Activated naive CD4-positive, alpha-beta T cell treated with anti-CD3 and anti-CD28 coated beads for 36 hours (primary cell): ENCODE measurements at regions of chr17 and their contacts with region 1.

Region 1: GRCh38 chr17:75978938-75979704 is at the starts of genes ACOX1 and TEN1:
- DNase-seq: peak; percentile 98
- H3K4me3 Mint-ChIP-seq: peak within 1 kb of the TSS; percentile 99
- H3K27ac Mint-ChIP-seq: peak within 1 kb of the TSS; percentile 100
- H3K4me1 Mint-ChIP-seq: peaks cover 30% of the 10 kb centered on the region
- H3K27me3 Mint-ChIP-seq: no peaks in the 10 kb centered on the region
- total RNA-seq, gene ACOX1: 31.4 to 34.9 TPM
- total RNA-seq, gene TEN1: 9.7 to 12.2 TPM

Region 2: GRCh38 chr17:75827252-75828115 is 151.6 kb before region 1 on chr17:
- CTCF ChIA-PET with region 1: no interaction called
- intact Hi-C with region 1: loop called (anchors 5 kb)
- DNase-seq: peak; percentile 75
- H3K4me3 Mint-ChIP-seq: peak overlapping the region; percentile 29
- H3K27ac Mint-ChIP-seq: peak overlapping the region; percentile 80
- H3K4me1 Mint-ChIP-seq: peaks cover 18% of the 10 kb centered on the region
- H3K27me3 Mint-ChIP-seq: no peaks in the 10 kb centered on the region

Region 3: DNA sequence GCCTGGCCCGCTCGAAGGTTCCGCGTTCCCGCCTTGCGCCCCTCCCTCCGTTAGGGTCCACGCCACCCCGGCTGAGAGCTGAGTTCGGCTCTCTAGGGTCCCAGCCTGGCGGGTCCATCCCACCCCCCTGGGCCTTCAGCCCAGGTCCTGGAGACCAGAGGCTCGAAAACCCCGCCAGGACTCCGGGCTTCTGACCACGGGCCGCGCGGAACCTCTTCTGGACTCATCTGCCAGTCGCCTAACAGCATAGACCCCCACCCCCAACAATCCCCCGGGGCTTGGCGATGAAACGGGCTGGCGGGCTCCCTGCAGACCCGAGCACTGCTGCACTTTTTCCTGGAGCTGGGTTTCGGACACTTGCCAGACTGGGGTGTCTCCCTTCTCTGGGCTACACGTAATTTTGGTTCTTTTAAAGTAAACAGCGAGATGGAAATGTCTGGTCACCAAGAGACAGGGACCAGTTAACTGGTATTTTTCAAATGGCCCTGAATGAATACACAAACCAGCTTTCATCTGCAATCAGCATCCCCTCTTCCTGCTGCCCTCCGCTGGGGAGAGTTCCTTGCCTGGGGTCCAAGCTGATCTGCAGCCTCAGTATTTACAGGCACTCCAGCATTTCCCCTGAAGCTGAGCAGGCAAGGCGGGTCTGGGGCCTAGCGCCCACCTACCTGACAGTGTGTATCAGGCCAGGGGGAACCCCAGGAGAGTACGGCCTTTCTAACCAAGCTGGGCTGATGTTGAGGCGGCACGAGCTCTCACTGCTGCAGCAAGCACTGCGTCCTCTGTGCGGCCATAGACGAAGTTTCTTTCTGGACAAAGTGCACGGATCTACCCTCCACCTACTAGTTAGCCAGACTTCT is 81.7 kb before region 1 on chr17:
- CTCF ChIA-PET with region 1: no interaction called
- intact Hi-C with region 1: no loop called
- DNase-seq: no peak
- H3K4me3 Mint-ChIP-seq: peak overlapping the region; percentile 63
- H3K27ac Mint-ChIP-seq: peak overlapping the region; percentile 43
- H3K4me1 Mint-ChIP-seq: peaks cover 28% of the 10 kb centered on the region
- H3K27me3 Mint-ChIP-seq: no peaks in the 10 kb centered on the region

Region 4: DNA sequence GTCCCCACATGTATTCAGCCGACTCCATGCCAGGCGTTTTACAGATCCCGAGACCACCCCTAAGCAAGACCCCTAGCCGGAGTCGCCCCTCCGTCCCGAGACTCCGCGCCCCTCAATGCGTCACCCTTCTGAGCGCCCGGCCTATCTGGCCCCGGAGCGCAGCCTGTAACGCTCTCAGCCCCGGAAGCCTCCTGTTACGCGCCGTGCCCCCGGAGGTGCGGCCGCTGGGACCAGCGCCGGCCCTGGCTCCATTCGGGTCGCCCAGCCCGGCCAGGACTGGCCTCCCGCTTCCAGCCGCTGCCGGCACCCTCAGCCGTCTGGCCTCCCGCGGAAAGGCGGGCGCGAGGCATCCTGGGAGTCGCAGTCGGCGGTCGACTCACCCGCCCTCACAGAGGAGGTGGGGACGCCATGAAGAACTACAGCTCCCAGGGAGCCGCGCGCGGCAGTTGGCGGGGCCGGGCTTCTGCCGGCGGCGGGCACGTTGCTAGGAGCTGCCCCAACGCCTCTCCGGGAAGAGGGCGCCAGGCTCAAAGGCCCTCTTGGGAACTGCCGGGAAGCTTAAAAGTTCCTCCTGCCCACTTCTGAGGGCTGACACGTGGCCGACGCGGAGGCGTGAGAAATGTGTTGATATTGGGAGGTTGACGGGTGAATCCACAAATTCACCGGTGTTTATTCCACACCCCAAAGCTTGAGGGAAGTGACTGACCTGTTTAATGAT is 38.2 kb before region 1 on chr17 and contains the start of gene FBF1:
- CTCF ChIA-PET with region 1: no interaction called
- intact Hi-C with region 1: loop called (anchors 1 kb)
- DNase-seq: peak; percentile 92
- H3K4me3 Mint-ChIP-seq: peak within 1 kb of the TSS; percentile 88
- H3K27ac Mint-ChIP-seq: peak within 1 kb of the TSS; percentile 76
- H3K4me1 Mint-ChIP-seq: peaks cover 11% of the 10 kb centered on the region
- H3K27me3 Mint-ChIP-seq: no peaks in the 10 kb centered on the region
- total RNA-seq, gene FBF1: 20.7 to 21.0 TPM

Region 5: GRCh38 chr17:76000016-76000754 is 21.1 kb after region 1 on chr17:
- CTCF ChIA-PET with region 1: interaction called, 6 read pairs
- intact Hi-C with region 1: loop called (anchors 2 kb)
- DNase-seq: peak; percentile 75
- H3K4me3 Mint-ChIP-seq: no peak overlapping the region
- H3K27ac Mint-ChIP-seq: no peak overlapping the region
- H3K4me1 Mint-ChIP-seq: peaks cover 16% of the 10 kb centered on the region
- H3K27me3 Mint-ChIP-seq: no peaks in the 10 kb centered on the region

Region 6: DNA sequence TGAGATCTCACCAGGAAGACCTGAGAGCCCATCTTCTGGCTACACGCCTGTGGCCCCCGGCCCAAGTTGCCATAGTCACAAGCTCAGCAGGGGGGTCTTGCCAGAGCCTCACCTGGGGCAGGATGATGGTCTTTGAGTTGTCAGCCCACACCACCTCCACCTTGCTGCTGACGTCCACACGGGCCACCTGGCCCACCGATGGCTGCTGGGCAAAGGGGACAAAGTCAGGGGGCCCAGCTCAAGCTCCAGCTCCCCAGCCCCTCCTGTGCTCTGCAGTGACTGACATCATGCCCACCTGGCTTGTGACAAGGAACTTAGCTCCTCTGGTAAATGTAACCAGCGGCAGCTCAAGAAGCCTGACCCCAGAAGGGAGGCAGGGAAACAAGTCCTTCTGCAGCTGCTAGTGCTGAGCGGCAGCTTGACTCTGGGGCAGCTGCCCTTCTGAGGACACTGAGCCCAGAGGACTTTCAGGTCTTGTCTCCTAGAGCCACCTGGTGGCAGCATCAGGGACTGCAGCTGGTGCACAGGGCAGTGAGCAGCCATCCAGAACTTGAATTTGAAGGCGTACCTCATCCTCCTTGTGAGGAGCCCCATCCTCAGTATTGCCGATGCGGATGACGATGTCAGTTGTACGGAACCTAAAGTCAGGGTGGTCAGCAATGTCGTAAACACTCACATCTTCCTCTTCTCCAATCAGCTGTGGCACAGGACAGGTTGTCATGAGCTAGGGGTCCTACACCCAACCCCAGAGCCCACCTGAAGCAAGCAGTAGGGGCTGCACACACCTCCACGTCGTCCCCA is 418.8 kb after region 1 on chr17:
- CTCF ChIA-PET with region 1: no interaction called
- intact Hi-C with region 1: no loop called
- DNase-seq: peak; percentile 93
- H3K4me3 Mint-ChIP-seq: no peak overlapping the region
- H3K27ac Mint-ChIP-seq: no peak overlapping the region
- H3K4me1 Mint-ChIP-seq: no peaks in the 10 kb centered on the region
- H3K27me3 Mint-ChIP-seq: no peaks in the 10 kb centered on the region